ENCODE measurements at regions of chr1 and their contacts with region 1.

Region 1: GRCh38 chr1:226634166-226634588 is 85.6 kb downstream of the STUM start:
- DNase-seq: peak; percentile 65 to 91 (median 85)
- ATAC-seq: peak; percentile 74
- H3K4me3 ChIP-seq: no peak overlapping the region
- H3K4me3 Mint-ChIP-seq: peak overlapping the region; percentile 7
- H3K27ac ChIP-seq: peak overlapping the region; percentile 4 to 42
- H3K27ac Mint-ChIP-seq: peak overlapping the region; percentile 87
- H3K4me1 ChIP-seq: peaks cover 59% of the 10 kb centered on the region
- H3K4me1 Mint-ChIP-seq: peaks cover 52% of the 10 kb centered on the region
- H3K27me3 ChIP-seq: no peaks in the 10 kb centered on the region
- H3K27me3 Mint-ChIP-seq: no peaks in the 10 kb centered on the region
- CTCF ChIP-seq: peak; percentile 96

Region 2: GRCh38 chr1:226603022-226603857 is 30.9 kb before region 1 on chr1:
- CTCF ChIA-PET with region 1: no interaction called
- POLR2A ChIA-PET with region 1: no interaction called
- intact Hi-C with region 1: no loop called
- DNase-seq: no peak
- ATAC-seq: no peak
- H3K4me3 ChIP-seq: no peak overlapping the region
- H3K4me3 Mint-ChIP-seq: no peak overlapping the region
- H3K27ac ChIP-seq: no peak overlapping the region
- H3K27ac Mint-ChIP-seq: no peak overlapping the region
- H3K4me1 ChIP-seq: no peaks in the 10 kb centered on the region
- H3K4me1 Mint-ChIP-seq: no peaks in the 10 kb centered on the region
- H3K27me3 ChIP-seq: no peaks in the 10 kb centered on the region
- H3K27me3 Mint-ChIP-seq: no peaks in the 10 kb centered on the region
- CTCF ChIP-seq: no peak

Region 3: GRCh38 chr1:226649780-226650179 is 15.6 kb after region 1 on chr1:
- CTCF ChIA-PET with region 1: interaction called, 40 read pairs
- POLR2A ChIA-PET with region 1: interaction called, 3 read pairs
- intact Hi-C with region 1: loop called in 1 of 2 experiments (anchors 2 kb)
- DNase-seq: peak in 6 of 9 experiments; percentile 53 to 74 (median 64)
- ATAC-seq: no peak
- H3K4me3 ChIP-seq: no peak overlapping the region
- H3K4me3 Mint-ChIP-seq: no peak overlapping the region
- H3K27ac ChIP-seq: peak overlapping the region in 1 of 2 experiments; percentile 23
- H3K27ac Mint-ChIP-seq: no peak overlapping the region
- H3K4me1 ChIP-seq: peaks cover 52% of the 10 kb centered on the region
- H3K4me1 Mint-ChIP-seq: peaks cover 57% of the 10 kb centered on the region
- H3K27me3 ChIP-seq: no peaks in the 10 kb centered on the region
- H3K27me3 Mint-ChIP-seq: no peaks in the 10 kb centered on the region
- CTCF ChIP-seq: peak; percentile 59

Region 4: GRCh38 chr1:226679853-226680516 is 45.8 kb after region 1 on chr1:
- CTCF ChIA-PET with region 1: interaction called, 92 read pairs
- POLR2A ChIA-PET with region 1: interaction called, 10 read pairs
- intact Hi-C with region 1: no loop called
- DNase-seq: peak; percentile 51 to 88 (median 78)
- ATAC-seq: peak; percentile 18
- H3K4me3 ChIP-seq: peak overlapping the region; percentile 26 to 34
- H3K4me3 Mint-ChIP-seq: peak overlapping the region; percentile 75
- H3K27ac ChIP-seq: peak overlapping the region; percentile 69 to 86
- H3K27ac Mint-ChIP-seq: peak overlapping the region; percentile 99
- H3K4me1 ChIP-seq: peaks cover 99% of the 10 kb centered on the region
- H3K4me1 Mint-ChIP-seq: peaks cover 99% of the 10 kb centered on the region
- H3K27me3 ChIP-seq: no peaks in the 10 kb centered on the region
- H3K27me3 Mint-ChIP-seq: no peaks in the 10 kb centered on the region
- CTCF ChIP-seq: no peak

Region 5: GRCh38 chr1:226697151-226697939 is 63.2 kb after region 1 on chr1:
- CTCF ChIA-PET with region 1: interaction called, 25 read pairs
- POLR2A ChIA-PET with region 1: no interaction called
- intact Hi-C with region 1: loop called in 1 of 2 experiments (anchors 2 kb)
- DNase-seq: peak in 4 of 9 experiments; percentile 44 to 80 (median 52)
- ATAC-seq: peak; percentile 76
- H3K4me3 ChIP-seq: no peak overlapping the region
- H3K4me3 Mint-ChIP-seq: peak overlapping the region; percentile 59
- H3K27ac ChIP-seq: peak overlapping the region; percentile 29 to 57
- H3K27ac Mint-ChIP-seq: peak overlapping the region; percentile 98
- H3K4me1 ChIP-seq: peaks cover 97% of the 10 kb centered on the region
- H3K4me1 Mint-ChIP-seq: peaks cover 92% of the 10 kb centered on the region
- H3K27me3 ChIP-seq: no peaks in the 10 kb centered on the region
- H3K27me3 Mint-ChIP-seq: no peaks in the 10 kb centered on the region
- CTCF ChIP-seq: no peak

Region 6: GRCh38 chr1:226731257-226731893 is 97.2 kb after region 1 on chr1:
- CTCF ChIA-PET with region 1: interaction called, 11 read pairs
- POLR2A ChIA-PET with region 1: interaction called, 5 read pairs
- intact Hi-C with region 1: loop called in 1 of 2 experiments (anchors 5 kb)
- DNase-seq: peak in 1 of 9 experiments; percentile 45
- ATAC-seq: no peak
- H3K4me3 ChIP-seq: peak overlapping the region; percentile 34 to 99
- H3K4me3 Mint-ChIP-seq: peak overlapping the region; percentile 94
- H3K27ac ChIP-seq: peak overlapping the region; percentile 61 to 98
- H3K27ac Mint-ChIP-seq: peak overlapping the region; percentile 94
- H3K4me1 ChIP-seq: peaks cover 54% of the 10 kb centered on the region
- H3K4me1 Mint-ChIP-seq: peaks cover 77% of the 10 kb centered on the region
- H3K27me3 ChIP-seq: no peaks in the 10 kb centered on the region
- H3K27me3 Mint-ChIP-seq: no peaks in the 10 kb centered on the region
- CTCF ChIP-seq: no peak

Region 7: GRCh38 chr1:226912587-226913176 is 278.5 kb after region 1 on chr1:
- CTCF ChIA-PET with region 1: no interaction called
- POLR2A ChIA-PET with region 1: interaction called, 3 read pairs
- intact Hi-C with region 1: loop called in 1 of 2 experiments (anchors 1 kb)
- DNase-seq: peak in 8 of 9 experiments; percentile 25 to 72 (median 46)
- ATAC-seq: peak; percentile 29
- H3K4me3 ChIP-seq: no peak overlapping the region
- H3K4me3 Mint-ChIP-seq: no peak overlapping the region
- H3K27ac ChIP-seq: no peak overlapping the region
- H3K27ac Mint-ChIP-seq: no peak overlapping the region
- H3K4me1 ChIP-seq: no peaks in the 10 kb centered on the region
- H3K4me1 Mint-ChIP-seq: no peaks in the 10 kb centered on the region
- H3K27me3 ChIP-seq: no peaks in the 10 kb centered on the region
- H3K27me3 Mint-ChIP-seq: no peaks in the 10 kb centered on the region
- CTCF ChIP-seq: no peak